SK-N-SH (cell line): ENCODE measurements at regions of chr1 and their contacts with region 1.

Region 1: GRCh38 chr1:212749821-212750535 is 41.6 kb downstream of the NSL1 start:
- DNase-seq: peak; percentile 65
- H3K4me3 ChIP-seq: peak overlapping the region in 1 of 2 experiments; percentile 9; a peak in 1 of 4 replicates
- H3K27ac ChIP-seq: no peak overlapping the region
- H3K4me1 ChIP-seq: peaks cover 11 to 13% of the 10 kb centered on the region in 2 experiments; a peak in 3 of 4 replicates
- H3K27me3 ChIP-seq: no peaks in the 10 kb centered on the region
- CTCF ChIP-seq: peak; percentile 86
- EP300 ChIP-seq: no peak
- RAD21 ChIP-seq: peak; percentile 66

Region 2: GRCh38 chr1:212583633-212584032 is 166.3 kb before region 1 on chr1:
- CTCF ChIA-PET with region 1: no interaction called
- POLR2A ChIA-PET with region 1: no interaction called
- DNase-seq: no peak
- H3K4me3 ChIP-seq: no peak overlapping the region
- H3K27ac ChIP-seq: no peak overlapping the region
- H3K4me1 ChIP-seq: peaks cover 0 to 2% of the 10 kb centered on the region in 2 experiments; a peak in 1 of 4 replicates
- H3K27me3 ChIP-seq: peaks cover 7% of the 10 kb centered on the region; the same call in 1 of the 2 replicates
- CTCF ChIP-seq: no peak
- EP300 ChIP-seq: no peak
- RAD21 ChIP-seq: no peak

Region 3: GRCh38 chr1:212595787-212596714 is 153.9 kb before region 1 on chr1:
- CTCF ChIA-PET with region 1: no interaction called
- POLR2A ChIA-PET with region 1: no interaction called
- DNase-seq: no peak
- H3K4me3 ChIP-seq: peak overlapping the region; percentile 7 to 22; a peak in 3 of 4 replicates
- H3K27ac ChIP-seq: peak overlapping the region; percentile 78 to 86
- H3K4me1 ChIP-seq: peaks cover 6 to 27% of the 10 kb centered on the region in 2 experiments; a peak in 3 of 4 replicates
- H3K27me3 ChIP-seq: no peaks in the 10 kb centered on the region; the same call in 1 of the 2 replicates
- CTCF ChIP-seq: peak; percentile 68
- EP300 ChIP-seq: peak in 1 of 2 experiments; percentile 66; a peak in 2 of 4 replicates
- RAD21 ChIP-seq: 0 out of 2 replicates have a peak, but pooled peaks have one; percentile 3

Region 4: GRCh38 chr1:212738330-212738729 is 11.6 kb before region 1 on chr1:
- CTCF ChIA-PET with region 1: interaction called, 31 read pairs
- POLR2A ChIA-PET with region 1: no interaction called
- DNase-seq: no peak
- H3K4me3 ChIP-seq: no peak overlapping the region
- H3K27ac ChIP-seq: no peak overlapping the region
- H3K4me1 ChIP-seq: no peaks in the 10 kb centered on the region; a peak in 1 of 4 replicates
- H3K27me3 ChIP-seq: no peaks in the 10 kb centered on the region
- CTCF ChIP-seq: no peak
- EP300 ChIP-seq: no peak
- RAD21 ChIP-seq: no peak

Region 5: DNA sequence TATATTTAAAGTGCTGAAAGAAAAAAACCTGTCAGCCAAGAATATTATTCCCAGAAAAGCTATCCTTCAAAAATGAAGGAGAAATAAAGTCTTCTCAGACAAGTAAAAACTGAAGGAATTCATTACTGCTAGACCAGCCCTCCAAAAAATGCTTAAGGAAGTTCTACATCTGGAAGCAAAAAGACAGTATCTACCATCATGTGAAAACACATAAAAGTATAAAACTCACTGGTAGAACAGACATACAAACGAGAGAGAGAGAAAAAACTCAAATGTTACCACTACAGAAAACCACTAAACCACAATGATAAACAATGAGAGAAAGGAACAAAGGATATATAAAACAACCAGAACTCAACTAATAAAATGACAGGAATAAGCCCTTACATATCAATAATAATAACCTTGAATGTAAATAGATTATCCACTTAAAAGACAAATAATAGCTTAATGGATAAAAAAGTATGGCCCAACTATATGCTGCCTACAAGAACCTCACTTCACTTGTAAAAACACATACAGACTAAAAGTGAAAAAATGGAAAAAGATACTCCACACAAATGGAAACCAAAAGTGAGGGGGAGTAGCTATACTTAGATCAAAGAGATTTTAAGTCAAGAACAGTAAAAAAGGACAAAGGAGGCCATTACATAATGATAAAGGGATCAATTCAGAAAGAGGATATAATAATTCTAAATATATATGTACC is 19.6 kb after region 1 on chr1:
- CTCF ChIA-PET with region 1: interaction called, 11 read pairs
- POLR2A ChIA-PET with region 1: no interaction called
- DNase-seq: no peak
- H3K4me3 ChIP-seq: no peak overlapping the region
- H3K27ac ChIP-seq: no peak overlapping the region
- H3K4me1 ChIP-seq: no peaks in the 10 kb centered on the region
- H3K27me3 ChIP-seq: no peaks in the 10 kb centered on the region
- CTCF ChIP-seq: no peak
- EP300 ChIP-seq: no peak
- RAD21 ChIP-seq: no peak

Region 6: GRCh38 chr1:212782422-212783154 is 32.6 kb after region 1 on chr1:
- CTCF ChIA-PET with region 1: interaction called, 17 read pairs
- POLR2A ChIA-PET with region 1: no interaction called
- DNase-seq: peak; percentile 41
- H3K4me3 ChIP-seq: no peak overlapping the region; a peak in 1 of 4 replicates
- H3K27ac ChIP-seq: no peak overlapping the region
- H3K4me1 ChIP-seq: no peaks in the 10 kb centered on the region
- H3K27me3 ChIP-seq: no peaks in the 10 kb centered on the region
- CTCF ChIP-seq: peak; percentile 74
- EP300 ChIP-seq: no peak
- RAD21 ChIP-seq: peak; percentile 79

Region 7: GRCh38 chr1:212994926-212995325 is 244.9 kb after region 1 on chr1:
- CTCF ChIA-PET with region 1: interaction called, 10 read pairs
- POLR2A ChIA-PET with region 1: no interaction called
- DNase-seq: no peak
- H3K4me3 ChIP-seq: no peak overlapping the region
- H3K27ac ChIP-seq: no peak overlapping the region
- H3K4me1 ChIP-seq: no peaks in the 10 kb centered on the region; a peak in 1 of 4 replicates
- H3K27me3 ChIP-seq: no peaks in the 10 kb centered on the region
- CTCF ChIP-seq: no peak
- EP300 ChIP-seq: no peak
- RAD21 ChIP-seq: no peak